ENCODE measurements at regions of chr5 and their contacts with region 1.

Region 1: DNA sequence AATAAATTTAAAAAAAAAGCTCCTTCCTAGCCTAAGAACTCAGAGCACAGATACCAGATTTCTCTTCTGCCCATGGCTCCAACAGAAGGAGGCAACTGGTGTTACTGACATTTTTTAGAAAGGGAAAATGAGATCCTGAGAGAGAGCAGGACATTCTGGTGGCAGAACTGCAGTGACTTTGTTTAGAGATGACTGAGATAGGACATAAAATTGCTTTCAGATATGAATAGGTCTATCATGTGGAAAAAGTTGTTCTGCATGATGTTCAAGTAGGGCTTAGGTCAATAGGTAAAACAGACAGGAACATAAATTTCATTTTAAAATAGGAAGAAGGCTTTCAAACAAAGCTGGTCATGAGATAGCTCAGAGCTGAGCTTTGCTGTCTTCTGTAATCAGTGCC is 49.6 kb downstream of the NIPAL4 start:
- DNase-seq: no peak
- ATAC-seq: no peak
- H3K4me3 Mint-ChIP-seq: no peak overlapping the region
- H3K27ac Mint-ChIP-seq: peak overlapping the region; percentile 93
- H3K4me1 Mint-ChIP-seq: peaks cover 85% of the 10 kb centered on the region
- H3K27me3 Mint-ChIP-seq: no peaks in the 10 kb centered on the region
- CTCF ChIP-seq: no peak

Region 2: DNA sequence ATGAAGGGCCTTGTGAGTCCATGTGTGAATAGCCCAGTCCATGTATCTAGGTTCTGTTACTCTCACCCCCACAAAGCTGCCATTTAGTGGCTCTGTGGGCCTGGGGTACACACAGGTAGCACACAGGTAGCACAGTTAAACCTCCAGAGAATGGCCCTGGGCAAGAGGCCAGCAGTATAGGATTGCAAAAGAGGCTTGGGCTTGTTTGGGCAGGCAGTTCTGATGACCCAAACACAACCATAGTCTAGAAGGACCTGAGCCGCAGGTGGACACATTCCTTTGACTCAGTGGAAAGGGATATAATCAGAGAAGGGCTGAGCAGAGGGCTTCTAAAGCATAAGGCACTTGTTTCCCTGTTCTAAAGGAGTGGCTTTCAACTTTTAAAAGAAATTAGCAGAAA is 1509.5 kb before region 1 on chr5:
- CTCF ChIA-PET with region 1: no interaction called
- POLR2A ChIA-PET with region 1: no interaction called
- intact Hi-C with region 1: no loop called
- DNase-seq: no peak
- ATAC-seq: no peak
- H3K4me3 Mint-ChIP-seq: no peak overlapping the region
- H3K27ac Mint-ChIP-seq: no peak overlapping the region
- H3K4me1 Mint-ChIP-seq: no peaks in the 10 kb centered on the region
- H3K27me3 Mint-ChIP-seq: no peaks in the 10 kb centered on the region
- CTCF ChIP-seq: no peak

Region 3: DNA sequence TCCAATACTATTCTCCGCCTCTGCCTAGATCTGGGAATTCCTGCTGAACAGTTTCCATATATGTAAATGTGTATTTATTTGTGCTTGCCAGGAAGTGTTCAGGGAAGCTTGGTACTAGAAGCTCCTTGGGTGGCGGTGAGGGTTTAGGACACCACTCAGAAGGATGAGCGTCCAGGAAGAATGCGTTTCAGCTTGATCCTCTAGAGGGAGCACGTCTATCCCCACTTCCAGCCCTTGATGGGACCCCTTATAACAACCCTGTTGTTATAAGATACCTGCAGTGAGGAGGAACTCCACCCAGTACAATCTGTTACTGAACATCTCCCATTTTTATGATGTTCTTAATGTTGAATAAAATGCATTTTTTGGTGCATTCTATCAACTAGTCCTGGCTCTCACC is 154.8 kb before region 1 on chr5:
- CTCF ChIA-PET with region 1: no interaction called
- POLR2A ChIA-PET with region 1: no interaction called
- intact Hi-C with region 1: no loop called
- DNase-seq: no peak
- ATAC-seq: no peak
- H3K4me3 Mint-ChIP-seq: no peak overlapping the region
- H3K27ac Mint-ChIP-seq: no peak overlapping the region
- H3K4me1 Mint-ChIP-seq: peaks cover 20% of the 10 kb centered on the region
- H3K27me3 Mint-ChIP-seq: no peaks in the 10 kb centered on the region
- CTCF ChIP-seq: no peak

Region 4: GRCh38 chr5:157494178-157494832 is 15.3 kb before region 1 on chr5:
- CTCF ChIA-PET with region 1: no interaction called
- POLR2A ChIA-PET with region 1: interaction called, 10 read pairs
- intact Hi-C with region 1: no loop called
- DNase-seq: no peak
- ATAC-seq: peak; percentile 79
- H3K4me3 Mint-ChIP-seq: no peak overlapping the region
- H3K27ac Mint-ChIP-seq: peak overlapping the region; percentile 75
- H3K4me1 Mint-ChIP-seq: peaks cover 55% of the 10 kb centered on the region
- H3K27me3 Mint-ChIP-seq: no peaks in the 10 kb centered on the region
- CTCF ChIP-seq: no peak

Region 5: DNA sequence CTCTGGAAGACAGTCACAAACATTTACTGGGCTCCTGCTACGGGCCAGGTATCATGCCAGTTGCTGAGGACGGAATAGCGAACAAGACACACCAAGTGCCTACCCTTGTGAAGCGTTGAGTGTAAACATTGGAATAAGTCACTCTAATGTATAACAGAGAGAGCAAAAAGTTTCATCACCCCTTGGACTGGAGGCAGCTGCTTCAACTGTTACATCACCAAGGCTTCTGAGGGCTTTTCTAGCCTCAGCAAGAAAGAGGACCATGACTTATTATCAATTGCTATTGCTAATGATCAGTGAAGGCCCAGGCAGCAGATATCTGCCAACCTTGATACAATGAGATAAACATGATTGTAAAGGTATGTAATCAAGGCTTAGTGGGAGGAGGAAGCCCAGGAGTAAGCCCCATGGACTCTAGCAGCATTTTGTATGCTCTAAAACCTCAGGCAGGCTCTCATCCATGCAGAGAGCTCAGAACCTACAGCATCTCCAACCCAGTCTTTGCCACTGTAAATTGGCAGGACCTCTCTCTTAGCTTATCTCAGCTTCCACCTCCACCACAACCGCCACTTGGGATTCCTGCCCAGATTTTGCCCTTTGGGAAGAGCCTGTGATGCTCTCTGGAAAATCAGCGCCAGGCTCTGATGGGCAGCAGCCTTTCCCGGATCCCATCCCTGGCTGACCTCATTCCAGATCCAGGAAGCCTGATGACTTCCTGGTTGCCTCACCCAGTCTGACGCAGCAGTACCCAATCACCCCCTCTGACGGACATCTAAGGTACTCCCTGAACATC is 11.5 kb after region 1 on chr5:
- CTCF ChIA-PET with region 1: interaction called, 5 read pairs
- POLR2A ChIA-PET with region 1: interaction called, 28 read pairs
- intact Hi-C with region 1: no loop called
- DNase-seq: no peak
- ATAC-seq: no peak
- H3K4me3 Mint-ChIP-seq: peak overlapping the region; percentile 47
- H3K27ac Mint-ChIP-seq: peak overlapping the region; percentile 93
- H3K4me1 Mint-ChIP-seq: peaks cover 89% of the 10 kb centered on the region
- H3K27me3 Mint-ChIP-seq: no peaks in the 10 kb centered on the region
- CTCF ChIP-seq: no peak

Region 6: GRCh38 chr5:157590478-157590877 is 80.9 kb after region 1 on chr5:
- CTCF ChIA-PET with region 1: no interaction called
- POLR2A ChIA-PET with region 1: interaction called, 21 read pairs
- intact Hi-C with region 1: no loop called
- DNase-seq: no peak
- ATAC-seq: no peak
- H3K4me3 Mint-ChIP-seq: no peak overlapping the region
- H3K27ac Mint-ChIP-seq: no peak overlapping the region
- H3K4me1 Mint-ChIP-seq: peaks cover 50% of the 10 kb centered on the region
- H3K27me3 Mint-ChIP-seq: no peaks in the 10 kb centered on the region
- CTCF ChIP-seq: no peak